IMR-90 (cell line): ENCODE measurements at regions of chr6 and their contacts with region 1.

Region 1: GRCh38 chr6:70686548-70687133 is 19.0 kb downstream of the SMAP1 start:
- DNase-seq: peak; percentile 56
- ATAC-seq: peak; percentile 76
- H3K4me3 ChIP-seq: no peak overlapping the region
- H3K27ac ChIP-seq: no peak overlapping the region
- H3K4me1 ChIP-seq: no peaks in the 10 kb centered on the region
- H3K27me3 ChIP-seq: no peaks in the 10 kb centered on the region
- CTCF ChIP-seq: peak; percentile 73
- POLR2A ChIP-seq: no peak
- RAD21 ChIP-seq: peak; percentile 60

Region 2: DNA sequence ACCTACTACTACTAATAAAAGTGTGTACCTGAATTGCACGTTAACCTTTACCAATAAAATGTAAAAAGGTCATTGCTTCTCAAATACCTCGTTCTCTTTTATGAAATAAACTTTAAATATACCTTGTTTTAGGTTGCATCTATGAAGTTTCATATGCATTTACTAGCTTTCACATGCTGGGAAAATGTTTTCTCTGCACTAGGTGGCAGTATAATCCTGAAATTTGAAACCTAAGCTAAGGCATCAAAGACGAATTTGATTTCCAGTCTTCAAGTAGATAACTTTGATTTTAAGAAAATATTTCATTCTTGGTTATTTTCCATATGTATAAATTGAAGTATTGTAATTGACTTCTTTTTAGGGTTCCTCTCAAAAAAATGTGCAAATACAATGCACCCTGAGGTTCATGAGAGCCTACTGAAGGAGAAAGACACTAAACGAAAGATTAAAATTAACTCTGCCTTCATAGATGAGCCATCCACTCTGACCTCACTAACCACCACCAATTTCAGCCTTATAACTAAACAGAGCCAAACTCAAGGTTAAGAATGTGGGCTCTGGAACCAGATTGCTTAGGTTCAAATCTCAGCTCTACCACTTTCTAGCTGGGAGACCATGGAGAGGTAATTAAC is 376.5 kb before region 1 on chr6:
- CTCF ChIA-PET with region 1: no interaction called
- POLR2A ChIA-PET with region 1: no interaction called
- dilution Hi-C with region 1: no loop called
- in situ Hi-C with region 1: loop called (anchors 25 kb)
- intact Hi-C with region 1: loop called (anchors 2 kb)
- DNase-seq: peak; percentile 53
- ATAC-seq: no peak; the same call in 1 of the 2 replicates
- H3K4me3 ChIP-seq: no peak overlapping the region
- H3K27ac ChIP-seq: no peak overlapping the region
- H3K4me1 ChIP-seq: no peaks in the 10 kb centered on the region
- H3K27me3 ChIP-seq: peaks cover 33% of the 10 kb centered on the region
- CTCF ChIP-seq: peak; percentile 73
- POLR2A ChIP-seq: no peak
- RAD21 ChIP-seq: peak; percentile 56

Region 3: DNA sequence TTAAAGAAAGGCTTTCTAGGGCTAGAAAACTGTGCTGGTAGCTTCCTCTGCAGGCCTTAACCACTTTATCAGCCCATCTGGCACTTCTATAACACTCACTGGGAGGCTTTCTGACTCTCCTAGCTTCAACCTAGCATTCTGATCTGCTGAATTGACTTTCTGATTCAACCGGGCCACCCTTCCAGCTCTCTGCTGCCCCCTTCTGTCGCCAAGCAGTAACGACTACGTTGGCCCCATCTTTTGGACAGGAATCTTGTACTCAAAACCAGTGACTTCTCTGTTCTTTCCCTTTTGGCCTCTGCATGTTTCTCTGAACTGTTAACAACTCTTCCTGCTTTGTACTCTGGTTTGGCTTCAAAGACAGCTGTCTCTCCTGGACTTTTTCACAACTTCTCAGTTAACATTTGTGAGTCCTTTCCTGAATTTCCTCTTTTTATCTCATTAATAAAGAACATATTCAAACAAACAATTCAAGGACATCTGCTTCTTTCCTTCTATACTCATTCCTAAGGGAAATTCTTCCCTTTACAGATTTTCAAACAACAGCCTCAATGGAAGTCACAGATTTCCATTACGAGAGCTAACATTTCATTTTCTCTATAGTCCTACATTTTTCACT is 317.2 kb before region 1 on chr6:
- CTCF ChIA-PET with region 1: no interaction called
- POLR2A ChIA-PET with region 1: no interaction called
- dilution Hi-C with region 1: no loop called
- in situ Hi-C with region 1: no loop called
- intact Hi-C with region 1: loop called (anchors 1 kb)
- DNase-seq: peak; percentile 68
- ATAC-seq: peak; percentile 98
- H3K4me3 ChIP-seq: no peak overlapping the region
- H3K27ac ChIP-seq: no peak overlapping the region
- H3K4me1 ChIP-seq: no peaks in the 10 kb centered on the region
- H3K27me3 ChIP-seq: peaks cover 25% of the 10 kb centered on the region
- CTCF ChIP-seq: peak; percentile 91
- POLR2A ChIP-seq: no peak
- RAD21 ChIP-seq: peak; percentile 62

Region 4: DNA sequence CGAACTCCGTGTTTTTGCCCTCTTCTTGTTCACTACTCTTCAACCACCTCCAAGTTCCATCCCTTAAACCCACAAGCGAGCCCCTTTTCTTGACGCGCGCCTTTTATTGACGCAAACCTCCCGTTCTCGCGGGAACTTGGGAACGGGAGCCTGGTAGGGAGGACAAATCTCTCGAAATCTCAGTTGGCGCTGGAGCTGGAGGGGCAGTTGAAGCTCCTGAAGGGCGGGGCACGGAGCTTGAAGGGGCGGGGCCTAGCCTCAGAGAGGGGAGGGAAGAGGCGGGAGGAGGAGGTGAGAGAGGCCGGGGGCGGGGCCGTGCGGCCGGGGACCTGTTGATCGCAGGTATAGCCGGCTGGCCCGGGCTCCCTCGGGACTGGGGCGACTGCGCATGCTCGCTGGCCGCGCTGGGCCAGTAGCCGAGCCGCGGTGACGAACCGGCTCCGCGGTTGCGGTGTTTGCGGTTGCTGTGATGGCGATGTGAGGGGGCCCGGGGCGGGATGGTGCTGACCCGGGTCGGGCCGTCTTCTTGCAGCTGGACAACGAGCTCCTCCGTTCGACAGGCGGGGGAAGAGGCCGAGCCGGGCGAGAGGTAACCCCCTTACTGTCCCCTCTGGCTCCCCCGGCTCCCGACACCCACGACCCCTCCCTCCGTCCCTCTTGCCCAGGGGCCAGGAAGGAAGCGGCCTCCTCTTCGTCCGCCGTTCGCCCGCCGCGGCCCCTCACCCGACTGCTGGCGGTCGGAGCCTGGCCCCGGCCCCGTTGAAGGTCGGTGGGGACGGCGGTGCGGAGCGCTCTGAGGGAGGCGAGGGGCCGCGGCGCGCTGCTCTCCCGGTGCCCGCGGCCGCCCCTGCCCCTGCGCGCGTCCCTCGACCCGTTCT is 273.3 kb before region 1 on chr6 and contains the start of gene FAM135A:
- CTCF ChIA-PET with region 1: no interaction called
- POLR2A ChIA-PET with region 1: no interaction called
- dilution Hi-C with region 1: no loop called
- in situ Hi-C with region 1: no loop called
- intact Hi-C with region 1: loop called (anchors 2 kb)
- DNase-seq: peak; percentile 96
- ATAC-seq: peak; percentile 96
- H3K4me3 ChIP-seq: peak within 1 kb of the TSS; percentile 56
- H3K27ac ChIP-seq: peak within 1 kb of the TSS; percentile 81
- H3K4me1 ChIP-seq: no peaks in the 10 kb centered on the region
- H3K27me3 ChIP-seq: no peaks in the 10 kb centered on the region
- CTCF ChIP-seq: no peak
- POLR2A ChIP-seq: peak; percentile 79
- RAD21 ChIP-seq: no peak
- total RNA-seq, gene FAM135A: 7.9 and 9.7 TPM in 2 replicates

Region 5: DNA sequence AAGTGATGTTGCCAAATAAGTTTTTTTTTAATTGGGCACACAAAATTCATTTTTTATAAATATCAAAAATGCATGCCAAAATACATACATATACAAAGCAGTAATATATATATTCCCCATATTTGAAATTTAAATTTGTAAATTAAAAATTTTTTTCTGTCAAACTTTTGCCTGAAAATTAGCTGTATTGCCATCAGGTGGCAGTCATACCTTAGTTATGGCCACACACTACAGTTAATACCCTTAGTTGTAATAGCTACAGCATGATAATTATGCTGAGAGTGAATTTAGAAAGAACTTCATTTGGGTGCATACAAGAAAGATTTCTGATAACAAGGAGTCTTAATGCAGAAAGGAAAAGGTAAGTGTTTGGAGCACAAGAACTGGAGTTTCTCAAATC is 166.1 kb before region 1 on chr6:
- CTCF ChIA-PET with region 1: interaction called, 3 read pairs
- POLR2A ChIA-PET with region 1: no interaction called
- dilution Hi-C with region 1: no loop called
- in situ Hi-C with region 1: no loop called
- intact Hi-C with region 1: loop called (anchors 5 kb)
- DNase-seq: peak; percentile 18
- ATAC-seq: no peak
- H3K4me3 ChIP-seq: no peak overlapping the region
- H3K27ac ChIP-seq: no peak overlapping the region
- H3K4me1 ChIP-seq: no peaks in the 10 kb centered on the region
- H3K27me3 ChIP-seq: no peaks in the 10 kb centered on the region
- CTCF ChIP-seq: peak; percentile 49
- POLR2A ChIP-seq: no peak
- RAD21 ChIP-seq: peak; percentile 64

Region 6: DNA sequence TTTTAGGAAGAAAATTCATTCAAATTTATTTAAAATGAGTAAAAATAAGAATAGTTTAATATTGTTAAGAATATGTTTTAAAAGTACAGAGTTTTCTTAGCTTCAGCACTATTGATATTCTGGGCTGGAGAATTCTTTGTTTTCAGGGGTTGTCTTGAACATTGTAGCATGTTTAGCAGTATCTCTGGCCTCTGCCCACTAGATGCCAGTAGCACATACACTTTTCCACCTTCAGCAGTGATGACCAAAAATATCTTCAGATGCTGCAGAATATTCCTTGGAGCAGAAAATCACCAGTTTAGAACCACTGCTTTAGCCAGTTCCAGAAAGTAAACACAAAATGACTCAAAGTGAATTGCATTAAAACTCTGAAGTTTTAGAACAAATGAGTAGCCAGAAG is 139.3 kb before region 1 on chr6:
- CTCF ChIA-PET with region 1: no interaction called
- POLR2A ChIA-PET with region 1: no interaction called
- dilution Hi-C with region 1: no loop called
- in situ Hi-C with region 1: no loop called
- intact Hi-C with region 1: loop called (anchors 5 kb)
- DNase-seq: peak; percentile 37
- ATAC-seq: peak; percentile 57
- H3K4me3 ChIP-seq: no peak overlapping the region
- H3K27ac ChIP-seq: no peak overlapping the region
- H3K4me1 ChIP-seq: no peaks in the 10 kb centered on the region
- H3K27me3 ChIP-seq: no peaks in the 10 kb centered on the region
- CTCF ChIP-seq: peak; percentile 41
- POLR2A ChIP-seq: no peak
- RAD21 ChIP-seq: peak; percentile 50

Region 7: GRCh38 chr6:70790483-70791224 is 104.0 kb after region 1 on chr6:
- CTCF ChIA-PET with region 1: no interaction called
- POLR2A ChIA-PET with region 1: no interaction called
- dilution Hi-C with region 1: no loop called
- in situ Hi-C with region 1: no loop called
- intact Hi-C with region 1: no loop called
- DNase-seq: no peak
- ATAC-seq: no peak
- H3K4me3 ChIP-seq: no peak overlapping the region
- H3K27ac ChIP-seq: no peak overlapping the region
- H3K4me1 ChIP-seq: no peaks in the 10 kb centered on the region
- H3K27me3 ChIP-seq: no peaks in the 10 kb centered on the region
- CTCF ChIP-seq: no peak
- POLR2A ChIP-seq: no peak
- RAD21 ChIP-seq: no peak